GM12878 (cell line): ENCODE measurements at regions of chr18 and their contacts with region 1.

Region 1: DNA sequence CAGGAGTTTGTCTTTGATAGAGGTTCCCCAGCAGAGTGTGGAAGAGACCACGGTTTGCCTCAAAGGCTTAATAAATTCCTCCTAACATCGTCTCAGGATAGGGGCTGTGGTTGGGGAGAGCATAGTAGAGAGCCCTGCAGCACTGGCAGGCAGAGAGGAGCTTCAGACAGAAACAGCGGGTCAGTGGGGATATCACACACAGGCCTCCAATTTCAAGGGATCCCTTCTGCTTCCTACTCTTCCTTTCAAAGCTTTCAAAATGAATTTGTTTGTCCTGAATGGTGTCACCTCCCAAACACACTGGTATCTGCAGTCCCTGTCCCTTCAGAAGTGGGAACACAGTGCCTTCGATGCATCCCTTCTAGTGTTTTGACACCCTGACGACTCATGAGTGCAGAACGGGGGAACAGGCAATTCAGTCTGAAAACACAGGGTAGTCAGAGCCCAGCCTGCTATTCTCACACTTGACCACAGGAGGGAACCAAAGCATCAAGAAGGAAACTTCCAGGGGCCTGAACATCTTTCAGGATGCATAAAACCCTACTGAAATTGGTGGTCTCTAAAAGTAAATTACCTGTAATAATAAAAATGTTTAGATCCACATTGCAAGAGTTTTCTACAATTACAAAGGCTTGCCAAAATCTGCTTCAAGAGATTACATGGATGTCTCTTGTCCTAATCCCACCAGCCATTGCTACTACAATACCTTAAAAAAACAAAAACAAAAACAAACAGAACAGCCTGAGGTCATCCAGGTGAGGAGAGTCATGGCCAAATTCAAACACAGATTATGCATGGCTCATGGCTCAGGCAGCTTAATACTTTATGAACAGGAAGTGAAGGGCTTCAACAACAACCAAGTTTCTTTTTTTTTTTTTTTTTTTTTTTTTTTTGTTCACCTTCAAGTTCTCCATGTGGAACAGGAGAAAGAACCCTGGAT is 49.8 kb downstream of the SLC14A2 start:
- DNase-seq: no peak
- ATAC-seq: peak; percentile 85
- H3K4me3 ChIP-seq: no peak overlapping the region
- H3K27ac ChIP-seq: no peak overlapping the region
- H3K4me1 ChIP-seq: peaks cover 18% of the 10 kb centered on the region
- H3K27me3 ChIP-seq: no peaks in the 10 kb centered on the region
- CTCF ChIP-seq: peak; percentile 92 to 95 (median 95)
- EP300 ChIP-seq: no peak
- POLR2A ChIP-seq: no peak
- RAD21 ChIP-seq: peak; percentile 97

Region 2: DNA sequence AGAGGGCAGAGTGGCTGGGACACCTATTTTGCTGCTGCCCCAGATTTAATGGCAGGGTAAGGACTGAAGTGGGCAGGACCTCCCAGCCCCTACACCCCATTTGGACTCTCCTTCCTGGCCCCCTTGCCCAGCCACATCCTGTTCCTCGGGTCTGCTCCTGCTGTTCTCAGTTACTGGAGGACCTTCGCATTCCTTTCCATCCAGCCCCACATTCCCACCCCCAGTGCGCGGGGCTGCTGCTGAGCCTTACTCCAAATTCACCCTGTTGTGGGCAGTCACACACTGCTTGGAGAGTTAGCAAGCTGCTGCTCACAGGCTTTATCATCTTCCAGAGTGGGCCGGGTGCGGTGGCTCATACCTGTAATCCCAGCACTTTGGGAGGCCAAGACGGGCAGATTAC is 125.0 kb before region 1 on chr18:
- CTCF ChIA-PET with region 1: no interaction called
- POLR2A ChIA-PET with region 1: no interaction called
- RAD21 ChIA-PET with region 1: no interaction called
- SMC1A ChIA-PET with region 1: no interaction called
- in situ Hi-C with region 1: no loop called
- intact Hi-C with region 1: no loop called
- DNase-seq: no peak
- ATAC-seq: no peak
- H3K4me3 ChIP-seq: no peak overlapping the region
- H3K27ac ChIP-seq: no peak overlapping the region
- H3K4me1 ChIP-seq: no peaks in the 10 kb centered on the region
- H3K27me3 ChIP-seq: no peaks in the 10 kb centered on the region; a peak in 1 of 4 replicates
- CTCF ChIP-seq: no peak
- EP300 ChIP-seq: no peak
- POLR2A ChIP-seq: no peak
- RAD21 ChIP-seq: no peak

Region 3: DNA sequence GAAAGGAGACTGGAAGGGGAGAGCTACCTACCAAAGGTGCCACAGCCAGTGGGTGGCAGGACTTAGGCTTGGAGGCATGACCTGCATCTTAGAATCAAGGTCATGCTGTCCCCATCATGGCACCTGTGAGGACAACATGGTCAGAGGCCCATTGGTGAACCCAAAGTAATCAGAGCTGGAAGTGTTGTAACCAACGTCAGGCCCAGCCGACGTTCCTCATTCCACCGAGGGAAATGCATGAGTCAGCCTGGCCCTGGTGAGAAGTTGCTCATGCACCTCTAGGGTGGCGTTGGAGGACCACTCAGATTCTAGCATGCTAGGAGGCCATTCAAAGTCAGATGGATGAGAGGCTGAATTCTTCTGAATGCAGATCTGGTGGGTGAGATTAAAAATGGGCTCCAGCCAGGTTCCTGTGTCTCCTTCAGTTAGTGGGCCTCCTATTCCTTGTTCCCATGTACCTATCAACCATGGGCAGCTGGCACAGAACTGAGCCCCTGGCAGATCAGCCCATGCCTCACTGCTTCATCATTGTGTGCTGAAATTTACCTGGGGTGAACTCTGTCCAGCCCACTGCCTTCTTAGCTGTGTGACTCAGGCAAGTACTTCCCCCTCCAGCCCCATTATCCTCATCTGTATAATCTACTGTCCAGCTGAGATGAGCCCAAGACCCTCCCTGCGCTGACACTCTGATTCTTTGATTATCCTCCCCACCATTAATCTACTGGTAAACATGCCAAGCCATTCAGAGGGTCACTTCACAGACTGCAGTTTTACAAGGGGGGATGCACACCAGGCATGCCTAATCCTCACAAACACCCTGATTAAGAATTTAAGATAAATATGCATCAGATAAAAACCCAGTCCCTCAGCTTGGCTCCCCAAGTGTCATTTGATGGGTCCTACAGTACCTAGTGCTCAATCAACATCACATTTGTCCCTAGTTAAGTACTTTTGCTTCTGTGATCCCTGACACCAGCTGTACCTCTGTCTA is 35.8 kb before region 1 on chr18:
- CTCF ChIA-PET with region 1: no interaction called
- POLR2A ChIA-PET with region 1: no interaction called
- RAD21 ChIA-PET with region 1: no interaction called
- SMC1A ChIA-PET with region 1: no interaction called
- in situ Hi-C with region 1: no loop called
- intact Hi-C with region 1: no loop called
- DNase-seq: no peak
- ATAC-seq: no peak
- H3K4me3 ChIP-seq: no peak overlapping the region
- H3K27ac ChIP-seq: no peak overlapping the region
- H3K4me1 ChIP-seq: no peaks in the 10 kb centered on the region
- H3K27me3 ChIP-seq: no peaks in the 10 kb centered on the region; a peak in 2 of 4 replicates
- CTCF ChIP-seq: no peak
- EP300 ChIP-seq: no peak
- POLR2A ChIP-seq: no peak
- RAD21 ChIP-seq: no peak

Region 4: GRCh38 chr18:45677276-45677807 is 12.2 kb after region 1 on chr18:
- CTCF ChIA-PET with region 1: interaction called, 33 read pairs
- POLR2A ChIA-PET with region 1: no interaction called
- RAD21 ChIA-PET with region 1: interaction called, 8 read pairs
- SMC1A ChIA-PET with region 1: interaction called, 16 read pairs
- in situ Hi-C with region 1: no loop called
- intact Hi-C with region 1: no loop called
- DNase-seq: no peak
- ATAC-seq: no peak
- H3K4me3 ChIP-seq: no peak overlapping the region
- H3K27ac ChIP-seq: no peak overlapping the region
- H3K4me1 ChIP-seq: no peaks in the 10 kb centered on the region
- H3K27me3 ChIP-seq: no peaks in the 10 kb centered on the region
- CTCF ChIP-seq: no peak
- EP300 ChIP-seq: no peak
- POLR2A ChIP-seq: no peak
- RAD21 ChIP-seq: no peak

Region 5: GRCh38 chr18:45730832-45731575 is 65.9 kb after region 1 on chr18:
- CTCF ChIA-PET with region 1: interaction called, 93 read pairs
- POLR2A ChIA-PET with region 1: no interaction called
- RAD21 ChIA-PET with region 1: no interaction called
- SMC1A ChIA-PET with region 1: interaction called, 18 read pairs
- in situ Hi-C with region 1: no loop called
- intact Hi-C with region 1: no loop called
- DNase-seq: no peak
- ATAC-seq: no peak
- H3K4me3 ChIP-seq: no peak overlapping the region
- H3K27ac ChIP-seq: no peak overlapping the region
- H3K4me1 ChIP-seq: no peaks in the 10 kb centered on the region
- H3K27me3 ChIP-seq: no peaks in the 10 kb centered on the region; a peak in 2 of 4 replicates
- CTCF ChIP-seq: no peak
- EP300 ChIP-seq: no peak
- POLR2A ChIP-seq: no peak
- RAD21 ChIP-seq: no peak

Region 6: DNA sequence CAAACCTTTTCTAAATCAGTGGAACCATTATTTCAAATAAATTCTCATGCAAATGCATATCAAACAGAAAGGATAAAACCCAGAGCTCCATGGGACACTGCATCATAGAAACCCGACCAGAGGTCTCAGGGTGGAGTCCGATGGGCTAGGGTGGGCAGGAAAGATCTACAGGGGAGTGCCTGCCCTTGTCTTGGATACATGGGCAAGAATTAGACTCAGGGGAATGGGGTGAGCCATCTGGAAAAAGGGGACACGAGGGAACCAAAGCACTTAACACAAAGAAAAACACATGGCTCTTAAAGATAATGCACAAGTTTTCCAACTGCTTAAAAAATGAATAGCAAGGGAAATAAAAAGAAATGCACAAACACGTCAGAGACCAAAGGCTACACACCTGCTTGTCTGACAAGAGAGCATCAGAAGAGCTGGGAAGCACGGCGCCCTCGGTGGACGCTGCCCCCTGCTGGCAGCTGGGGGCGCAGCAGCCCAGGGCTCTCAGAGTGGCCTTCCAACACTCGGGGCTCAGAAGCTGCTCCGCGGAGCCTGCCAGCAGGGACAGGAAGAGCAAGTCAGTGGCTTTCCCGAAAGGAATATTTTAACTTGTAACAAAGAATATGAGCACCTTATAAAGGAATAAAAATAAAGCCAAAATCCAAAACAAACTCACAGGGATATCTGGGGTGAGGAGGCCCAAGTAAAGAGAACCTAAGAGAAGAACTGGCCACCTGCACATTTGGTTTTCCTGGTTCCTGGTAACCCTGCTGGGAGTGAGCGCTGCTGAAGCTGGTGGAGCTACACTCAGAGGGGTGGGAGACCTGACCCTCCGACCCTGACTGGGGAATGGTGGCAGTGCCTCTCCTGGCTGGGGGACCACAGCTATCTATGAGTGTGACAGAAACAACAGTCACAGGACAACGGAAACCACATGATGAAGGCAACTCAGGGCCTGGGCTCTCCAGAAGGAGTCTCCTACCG is 214.9 kb after region 1 on chr18:
- CTCF ChIA-PET with region 1: interaction called, 165 read pairs
- POLR2A ChIA-PET with region 1: interaction called, 4 read pairs
- RAD21 ChIA-PET with region 1: interaction called, 85 read pairs
- SMC1A ChIA-PET with region 1: interaction called, 87 read pairs
- in situ Hi-C with region 1: no loop called
- intact Hi-C with region 1: loop called (anchors 1 kb)
- DNase-seq: peak; percentile 17
- ATAC-seq: peak; percentile 96
- H3K4me3 ChIP-seq: no peak overlapping the region
- H3K27ac ChIP-seq: no peak overlapping the region
- H3K4me1 ChIP-seq: peaks cover 5% of the 10 kb centered on the region; the same call in 1 of the 2 replicates
- H3K27me3 ChIP-seq: no peaks in the 10 kb centered on the region
- CTCF ChIP-seq: peak; percentile 95 to 99 (median 99)
- EP300 ChIP-seq: no peak
- POLR2A ChIP-seq: no peak
- RAD21 ChIP-seq: peak; percentile 93

Region 7: GRCh38 chr18:45974088-45974536 is 309.0 kb after region 1 on chr18:
- CTCF ChIA-PET with region 1: interaction called, 16 read pairs
- POLR2A ChIA-PET with region 1: no interaction called
- RAD21 ChIA-PET with region 1: interaction called, 8 read pairs
- SMC1A ChIA-PET with region 1: interaction called, 16 read pairs
- in situ Hi-C with region 1: no loop called
- intact Hi-C with region 1: loop called (anchors 1 kb)
- DNase-seq: peak; percentile 32
- ATAC-seq: peak; percentile 90
- H3K4me3 ChIP-seq: no peak overlapping the region
- H3K27ac ChIP-seq: no peak overlapping the region
- H3K4me1 ChIP-seq: no peaks in the 10 kb centered on the region
- H3K27me3 ChIP-seq: no peaks in the 10 kb centered on the region
- CTCF ChIP-seq: peak; percentile 57 to 87 (median 64); a peak in 5 of 6 replicates
- EP300 ChIP-seq: no peak
- POLR2A ChIP-seq: no peak
- RAD21 ChIP-seq: peak; percentile 93

Region 8: DNA sequence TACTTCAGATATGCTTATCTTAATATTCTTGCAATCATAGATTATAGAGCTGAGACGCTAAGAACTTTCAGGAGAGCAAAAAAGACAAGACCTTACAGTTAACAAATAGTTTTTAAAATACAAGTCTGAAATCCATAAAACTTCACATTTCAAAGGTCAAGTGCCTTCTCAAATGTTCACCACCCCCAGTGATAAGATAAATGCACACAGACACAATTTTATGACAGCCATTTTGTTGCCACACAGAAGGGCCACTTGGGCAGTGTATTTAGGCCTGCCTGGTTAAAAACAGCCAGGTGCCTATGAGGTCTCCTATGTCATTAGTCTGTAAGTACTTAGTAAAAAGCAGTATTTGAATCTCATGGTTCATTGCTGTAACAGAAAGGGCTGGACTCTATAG is 415.1 kb after region 1 on chr18:
- CTCF ChIA-PET with region 1: no interaction called
- POLR2A ChIA-PET with region 1: no interaction called
- RAD21 ChIA-PET with region 1: interaction called, 3 read pairs
- SMC1A ChIA-PET with region 1: no interaction called
- in situ Hi-C with region 1: loop called (anchors 5 kb)
- intact Hi-C with region 1: loop called (anchors 2 kb)
- DNase-seq: no peak
- ATAC-seq: no peak
- H3K4me3 ChIP-seq: no peak overlapping the region
- H3K27ac ChIP-seq: no peak overlapping the region
- H3K4me1 ChIP-seq: no peaks in the 10 kb centered on the region
- H3K27me3 ChIP-seq: no peaks in the 10 kb centered on the region
- CTCF ChIP-seq: no peak
- EP300 ChIP-seq: no peak
- POLR2A ChIP-seq: no peak
- RAD21 ChIP-seq: no peak